Mammary epithelial cell (primary cell): ENCODE measurements at regions of chr20 and their contacts with region 1.

Region 1: DNA sequence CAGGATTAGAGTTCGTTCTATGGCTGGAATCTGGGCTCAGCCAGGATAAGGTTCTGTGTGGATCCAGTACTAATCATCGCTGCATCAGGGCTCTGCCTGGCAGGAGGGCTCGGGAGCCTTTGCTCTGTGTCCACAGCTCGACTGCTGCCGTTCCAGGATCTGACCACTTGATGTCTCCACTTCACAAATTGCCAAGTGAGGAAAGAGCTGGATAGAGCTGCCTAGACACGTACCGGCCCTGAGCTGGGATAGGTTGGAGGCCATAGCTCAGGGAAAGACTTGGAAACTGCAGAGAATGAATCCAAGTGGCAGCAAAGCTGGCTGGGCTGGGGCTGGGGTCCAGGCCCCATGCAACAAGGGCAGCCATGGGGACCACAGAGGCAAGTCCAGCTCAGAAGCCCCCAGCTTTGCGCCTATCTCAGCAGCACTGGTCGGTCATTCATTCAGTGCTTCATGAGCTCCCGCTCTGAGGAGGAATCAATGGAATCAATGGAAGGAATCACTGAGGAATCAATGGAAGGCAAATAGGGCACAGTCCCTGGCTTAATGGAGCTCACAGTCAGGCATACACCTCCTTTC is 38.0 kb upstream of the TOP1 start:
- DNase-seq: peak; percentile 82
- H3K4me3 ChIP-seq: no peak overlapping the region
- H3K27ac ChIP-seq: no peak overlapping the region
- H3K4me1 ChIP-seq: peaks cover 17% of the 10 kb centered on the region
- H3K27me3 ChIP-seq: no peaks in the 10 kb centered on the region
- CTCF ChIP-seq: peak; percentile 92 to 95

Region 2: DNA sequence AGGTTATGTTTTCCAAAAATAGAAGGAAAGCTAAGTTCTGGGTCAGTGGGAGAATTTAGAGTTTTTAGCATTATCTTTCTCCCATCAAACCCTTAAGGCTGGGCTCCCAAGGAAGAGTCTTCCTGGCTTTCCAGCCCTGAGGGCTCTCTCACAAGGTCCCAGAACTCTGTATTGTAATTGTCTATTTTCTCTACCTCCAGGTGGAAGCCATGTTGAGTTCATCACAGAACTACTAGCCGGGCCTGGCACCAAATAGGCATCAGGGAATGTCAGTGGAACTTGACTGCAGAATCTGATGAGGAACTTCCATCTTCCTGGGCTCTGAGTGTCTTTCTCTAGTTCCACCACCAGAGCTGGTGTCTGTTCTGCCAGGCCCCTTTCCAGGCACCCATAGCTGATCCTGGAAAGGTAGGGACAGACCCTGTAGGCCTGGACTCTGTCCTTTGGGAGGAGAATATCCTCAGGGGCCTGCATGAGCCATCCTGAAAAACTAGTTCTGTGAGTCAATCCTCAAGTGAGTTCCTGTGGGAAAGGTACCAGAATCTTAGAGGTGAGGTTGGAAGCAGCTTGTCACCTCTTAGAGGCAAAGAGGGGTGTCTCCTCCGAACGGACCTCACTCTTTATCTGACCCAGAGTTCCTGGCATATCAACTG is 26.9 kb after region 1 on chr20:
- CTCF ChIA-PET with region 1: interaction called, 7 read pairs
- dilution Hi-C with region 1: no loop called
- in situ Hi-C with region 1: no loop called
- intact Hi-C with region 1: loop called (anchors 1 kb)
- DNase-seq: peak; percentile 79
- H3K4me3 ChIP-seq: no peak overlapping the region
- H3K27ac ChIP-seq: peak overlapping the region; percentile 62
- H3K4me1 ChIP-seq: peaks cover 25% of the 10 kb centered on the region
- H3K27me3 ChIP-seq: no peaks in the 10 kb centered on the region
- CTCF ChIP-seq: no peak

Region 3: DNA sequence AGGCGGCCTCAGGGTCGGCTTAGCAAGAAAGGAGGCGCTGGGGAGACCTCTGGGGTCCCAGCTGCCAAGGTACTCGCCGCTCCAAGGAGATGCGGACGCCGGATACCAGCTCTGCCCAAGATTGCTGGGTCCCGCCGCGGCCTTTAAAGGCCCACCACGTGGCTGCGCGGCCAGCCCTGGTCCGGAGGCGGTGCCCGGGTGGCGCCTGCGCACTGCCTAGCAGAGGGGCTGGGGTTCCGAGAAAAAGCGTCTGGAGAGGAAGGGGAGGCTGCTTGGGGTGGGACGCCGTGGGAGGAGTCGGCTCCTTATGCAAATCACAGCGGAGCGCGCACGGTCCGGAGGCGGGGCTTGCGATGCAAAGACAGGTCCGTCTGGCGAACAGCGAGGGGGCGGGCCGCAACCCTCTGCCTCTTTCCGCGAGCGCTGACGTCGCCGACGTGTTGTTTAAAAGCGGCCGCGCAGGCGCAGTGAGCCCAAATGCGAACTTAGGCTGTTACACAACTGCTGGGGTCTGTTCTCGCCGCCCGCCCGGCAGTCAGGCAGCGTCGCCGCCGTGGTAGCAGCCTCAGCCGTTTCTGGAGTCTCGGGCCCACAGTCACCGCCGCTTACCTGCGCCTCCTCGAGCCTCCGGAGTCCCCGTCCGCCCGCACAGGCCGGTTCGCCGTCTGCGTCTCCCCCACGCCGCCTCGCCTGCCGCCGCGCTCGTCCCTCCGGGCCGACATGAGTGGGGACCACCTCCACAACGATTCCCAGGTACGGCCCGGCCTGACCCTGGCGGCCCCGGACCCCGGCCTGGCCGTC is 37.9 kb after region 1 on chr20 and contains the start of gene TOP1:
- CTCF ChIA-PET with region 1: interaction called, 4 read pairs
- dilution Hi-C with region 1: no loop called
- in situ Hi-C with region 1: no loop called
- intact Hi-C with region 1: loop called (anchors 1 kb)
- DNase-seq: peak; percentile 99
- H3K4me3 ChIP-seq: peak within 1 kb of the TSS; percentile 92 to 98 (median 97)
- H3K27ac ChIP-seq: peak within 1 kb of the TSS; percentile 93
- H3K4me1 ChIP-seq: peaks cover 30% of the 10 kb centered on the region
- H3K27me3 ChIP-seq: no peaks in the 10 kb centered on the region
- CTCF ChIP-seq: no peak
- total RNA-seq, gene TOP1: 13.2 to 92.0 TPM

Region 4: DNA sequence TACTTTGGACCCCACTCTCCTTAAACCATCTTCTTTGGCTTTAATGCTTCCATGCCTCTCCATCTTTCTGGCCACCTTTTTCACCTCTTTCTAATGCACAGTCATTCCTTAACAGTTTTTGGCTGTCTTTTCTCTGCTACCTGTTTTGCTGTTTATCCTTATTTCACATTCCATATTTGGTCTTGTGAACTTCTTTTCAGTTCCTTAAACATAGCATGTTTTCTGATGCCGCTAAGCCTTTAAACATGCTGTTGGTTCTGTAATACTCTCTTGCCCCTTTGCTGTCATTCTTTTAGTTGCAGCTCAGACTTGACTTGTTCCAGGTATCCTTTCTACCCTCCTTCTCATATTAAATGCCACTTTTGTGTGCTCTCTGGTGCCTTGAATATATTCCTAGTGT is 73.7 kb after region 1 on chr20:
- CTCF ChIA-PET with region 1: interaction called, 3 read pairs
- dilution Hi-C with region 1: no loop called
- in situ Hi-C with region 1: no loop called
- intact Hi-C with region 1: loop called (anchors 1 kb)
- DNase-seq: no peak
- H3K4me3 ChIP-seq: no peak overlapping the region
- H3K27ac ChIP-seq: no peak overlapping the region
- H3K4me1 ChIP-seq: no peaks in the 10 kb centered on the region
- H3K27me3 ChIP-seq: no peaks in the 10 kb centered on the region
- CTCF ChIP-seq: no peak

Region 5: GRCh38 chr20:41072190-41072863 is 81.7 kb after region 1 on chr20:
- CTCF ChIA-PET with region 1: interaction called, 6 read pairs
- dilution Hi-C with region 1: no loop called
- in situ Hi-C with region 1: no loop called
- intact Hi-C with region 1: loop called (anchors 2 kb)
- DNase-seq: peak; percentile 81
- H3K4me3 ChIP-seq: peak overlapping the region in 2 of 3 experiments; percentile 2 to 15
- H3K27ac ChIP-seq: peak overlapping the region; percentile 59
- H3K4me1 ChIP-seq: peaks cover 29% of the 10 kb centered on the region
- H3K27me3 ChIP-seq: no peaks in the 10 kb centered on the region
- CTCF ChIP-seq: no peak

Region 6: GRCh38 chr20:41078329-41078728 is 87.7 kb after region 1 on chr20:
- CTCF ChIA-PET with region 1: interaction called, 8 read pairs
- dilution Hi-C with region 1: no loop called
- in situ Hi-C with region 1: loop called in 1 of 2 experiments (anchors 5 kb)
- intact Hi-C with region 1: loop called (anchors 1 kb)
- DNase-seq: peak; percentile 27
- H3K4me3 ChIP-seq: no peak overlapping the region
- H3K27ac ChIP-seq: no peak overlapping the region
- H3K4me1 ChIP-seq: peaks cover 13% of the 10 kb centered on the region
- H3K27me3 ChIP-seq: no peaks in the 10 kb centered on the region
- CTCF ChIP-seq: peak; percentile 30 to 54

Region 7: GRCh38 chr20:41095110-41095969 is 104.7 kb after region 1 on chr20:
- CTCF ChIA-PET with region 1: interaction called, 12 read pairs
- dilution Hi-C with region 1: no loop called
- in situ Hi-C with region 1: loop called in 1 of 2 experiments (anchors 10 kb)
- intact Hi-C with region 1: loop called (anchors 1 kb)
- DNase-seq: no peak
- H3K4me3 ChIP-seq: no peak overlapping the region
- H3K27ac ChIP-seq: no peak overlapping the region
- H3K4me1 ChIP-seq: no peaks in the 10 kb centered on the region
- H3K27me3 ChIP-seq: no peaks in the 10 kb centered on the region
- CTCF ChIP-seq: peak; percentile 71 to 78

Region 8: DNA sequence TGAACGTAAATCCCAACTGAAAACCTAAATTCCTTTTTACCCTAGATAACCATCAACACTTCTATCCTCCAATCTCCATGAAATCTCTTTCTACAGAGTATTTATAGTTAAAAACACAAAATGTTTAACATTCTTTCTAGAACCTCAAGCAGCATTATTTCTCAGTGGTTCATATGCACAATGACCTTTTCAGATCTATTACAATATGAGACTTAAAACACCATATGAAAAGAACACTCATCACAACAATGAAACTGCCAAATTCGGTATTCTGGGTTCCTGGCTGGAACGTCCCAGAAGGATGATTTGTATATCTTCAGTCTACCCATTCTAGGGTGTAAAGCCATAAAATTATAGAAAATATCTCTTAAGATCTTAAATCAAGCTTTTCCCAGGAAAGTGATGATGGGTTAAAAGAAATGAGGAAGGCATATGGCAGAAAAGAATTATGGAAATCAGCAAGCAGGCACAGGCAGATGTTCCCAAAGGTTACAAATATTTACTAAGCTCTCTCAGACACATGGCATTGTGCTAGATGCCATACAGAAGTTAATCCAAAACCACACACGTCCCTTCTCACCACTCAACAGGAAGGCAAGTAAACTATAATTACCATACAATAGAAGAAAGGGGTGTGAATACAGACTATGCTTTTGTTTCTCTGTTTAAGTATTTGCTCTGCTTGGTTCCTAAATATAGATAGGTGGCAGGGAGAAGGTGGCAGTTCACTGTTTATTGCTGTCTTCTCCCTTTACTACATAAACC is 509.5 kb after region 1 on chr20:
- CTCF ChIA-PET with region 1: no interaction called
- dilution Hi-C with region 1: no loop called
- in situ Hi-C with region 1: no loop called
- intact Hi-C with region 1: no loop called
- DNase-seq: no peak
- H3K4me3 ChIP-seq: no peak overlapping the region
- H3K27ac ChIP-seq: no peak overlapping the region
- H3K4me1 ChIP-seq: no peaks in the 10 kb centered on the region
- H3K27me3 ChIP-seq: no peaks in the 10 kb centered on the region
- CTCF ChIP-seq: no peak